ENCODE measurements at regions of chr4 and their contacts with region 1.

Region 1: DNA sequence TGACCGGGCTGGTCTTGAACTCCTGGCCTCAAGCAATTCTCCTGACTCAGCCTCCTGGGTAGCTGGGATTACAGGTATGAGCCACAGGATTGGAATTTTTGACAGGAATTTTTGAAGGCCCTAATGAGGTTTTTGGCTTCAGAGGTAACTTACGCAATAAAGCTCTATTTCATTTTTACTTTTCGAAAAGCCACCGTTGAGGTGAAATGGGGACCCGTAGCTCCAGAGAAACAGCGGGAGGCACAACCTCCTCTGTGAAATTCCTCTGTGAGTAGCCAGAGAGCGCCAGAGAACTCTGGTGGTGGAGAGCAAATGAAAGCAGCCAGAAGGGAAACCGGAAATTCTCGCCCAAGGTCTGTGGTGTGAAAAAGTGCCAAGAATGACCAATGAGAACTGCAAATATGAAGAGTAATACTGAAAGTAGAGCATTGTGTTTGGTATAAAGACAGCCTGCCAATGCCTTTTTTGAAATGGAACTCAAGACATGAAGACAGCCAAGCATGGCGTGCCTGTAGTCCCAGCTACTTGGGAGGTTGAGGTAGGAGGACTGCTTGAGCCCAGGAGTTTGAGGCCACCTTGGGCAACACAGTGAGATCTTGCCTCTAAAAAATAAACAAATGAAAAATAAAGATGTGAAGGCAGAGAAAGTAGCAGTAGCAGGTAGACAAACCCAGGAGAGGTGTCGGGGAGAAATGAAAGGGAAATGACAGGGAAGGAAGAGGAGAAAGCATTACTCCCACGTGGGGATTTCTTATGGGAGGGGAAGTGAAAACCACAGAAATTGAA is 33.0 kb upstream of the TMEM131L start:
- DNase-seq: peak; percentile 68
- H3K4me3 Mint-ChIP-seq: peak overlapping the region; percentile 76
- H3K27ac Mint-ChIP-seq: peak overlapping the region; percentile 87
- H3K4me1 Mint-ChIP-seq: peaks cover 46% of the 10 kb centered on the region
- H3K27me3 Mint-ChIP-seq: peaks cover 4% of the 10 kb centered on the region

Region 2: GRCh38 chr4:153204247-153205027 is 228.7 kb before region 1 on chr4 and contains the start of gene TRIM2:
- intact Hi-C with region 1: no loop called
- DNase-seq: no peak
- H3K4me3 Mint-ChIP-seq: peak within 1 kb of the TSS; percentile 15
- H3K27ac Mint-ChIP-seq: peak within 1 kb of the TSS; percentile 18
- H3K4me1 Mint-ChIP-seq: peaks cover 17% of the 10 kb centered on the region
- H3K27me3 Mint-ChIP-seq: no peaks in the 10 kb centered on the region
- total RNA-seq, gene TRIM2: 0.16 and 0.24 TPM in 2 replicates

Region 3: DNA sequence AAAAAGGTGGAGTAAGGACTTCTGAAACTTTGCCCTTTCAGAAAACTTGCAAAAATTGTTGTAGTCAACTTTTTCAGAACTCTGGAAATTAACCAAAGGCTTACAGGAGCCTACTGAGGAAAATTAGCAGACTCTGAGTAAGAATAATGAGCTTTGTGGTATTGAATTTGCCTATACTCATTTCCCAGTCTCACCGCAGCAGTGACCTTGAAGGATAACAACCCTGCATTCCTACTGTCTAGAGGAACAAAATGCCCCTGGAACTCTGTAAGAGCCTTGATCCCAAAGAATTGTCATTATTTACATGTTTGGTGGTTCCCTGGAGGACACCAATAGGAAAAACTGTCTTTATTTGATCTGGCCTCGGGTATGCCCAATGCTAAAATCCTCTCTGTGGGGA is 30.8 kb before region 1 on chr4:
- intact Hi-C with region 1: no loop called
- DNase-seq: no peak
- H3K4me3 Mint-ChIP-seq: no peak overlapping the region
- H3K27ac Mint-ChIP-seq: no peak overlapping the region
- H3K4me1 Mint-ChIP-seq: no peaks in the 10 kb centered on the region
- H3K27me3 Mint-ChIP-seq: no peaks in the 10 kb centered on the region

Region 4: GRCh38 chr4:153466081-153466948 is 33.2 kb after region 1 on chr4 and contains the start of gene TMEM131L:
- intact Hi-C with region 1: loop called (anchors 1 kb)
- DNase-seq: peak; percentile 63
- H3K4me3 Mint-ChIP-seq: peak within 1 kb of the TSS; percentile 89
- H3K27ac Mint-ChIP-seq: peak within 1 kb of the TSS; percentile 90
- H3K4me1 Mint-ChIP-seq: peaks cover 50% of the 10 kb centered on the region
- H3K27me3 Mint-ChIP-seq: no peaks in the 10 kb centered on the region
- total RNA-seq, gene TMEM131L: 39.5 and 42.2 TPM in 2 replicates

Region 5: GRCh38 chr4:153521999-153522801 is 89.0 kb after region 1 on chr4:
- intact Hi-C with region 1: loop called (anchors 1 kb)
- DNase-seq: peak; percentile 54
- H3K4me3 Mint-ChIP-seq: peak overlapping the region; percentile 60
- H3K27ac Mint-ChIP-seq: peak overlapping the region; percentile 91
- H3K4me1 Mint-ChIP-seq: peaks cover 89% of the 10 kb centered on the region
- H3K27me3 Mint-ChIP-seq: no peaks in the 10 kb centered on the region

Region 6: GRCh38 chr4:153555730-153556433 is 122.7 kb after region 1 on chr4:
- intact Hi-C with region 1: no loop called
- DNase-seq: no peak
- H3K4me3 Mint-ChIP-seq: no peak overlapping the region
- H3K27ac Mint-ChIP-seq: no peak overlapping the region
- H3K4me1 Mint-ChIP-seq: peaks cover 9% of the 10 kb centered on the region
- H3K27me3 Mint-ChIP-seq: no peaks in the 10 kb centered on the region

Region 7: GRCh38 chr4:153643406-153644383 is 210.5 kb after region 1 on chr4:
- intact Hi-C with region 1: loop called (anchors 1 kb)
- DNase-seq: no peak
- H3K4me3 Mint-ChIP-seq: no peak overlapping the region
- H3K27ac Mint-ChIP-seq: no peak overlapping the region
- H3K4me1 Mint-ChIP-seq: peaks cover 22% of the 10 kb centered on the region
- H3K27me3 Mint-ChIP-seq: no peaks in the 10 kb centered on the region

Region 8: GRCh38 chr4:154491341-154492271 is 1058.4 kb after region 1 on chr4 and contains the start of gene DCHS2:
- intact Hi-C with region 1: no loop called
- DNase-seq: no peak
- H3K4me3 Mint-ChIP-seq: peak within 1 kb of the TSS; percentile 67
- H3K27ac Mint-ChIP-seq: peak within 1 kb of the TSS; percentile 58
- H3K4me1 Mint-ChIP-seq: peaks cover 15% of the 10 kb centered on the region
- H3K27me3 Mint-ChIP-seq: peaks cover 73% of the 10 kb centered on the region
- total RNA-seq, gene DCHS2: not detected in 2 replicates

Measured in activated T-helper 1 cell treated with anti-CD3 and anti-CD28 coated beads, Interleukin-12 subunit alpha, Interleukin-12 subunit beta, Interleukin-2, Interleukin-4 antibody, amounts not matched to agents 30 ng/mL and 10 ng/mL and 1 ng/mL, durations not matched to agents 14 hours and 24 hours and 36 hours (primary cell).